CD14-positive monocyte (primary cell): ENCODE measurements at regions of chr17 and their contacts with region 1.

Region 1: DNA sequence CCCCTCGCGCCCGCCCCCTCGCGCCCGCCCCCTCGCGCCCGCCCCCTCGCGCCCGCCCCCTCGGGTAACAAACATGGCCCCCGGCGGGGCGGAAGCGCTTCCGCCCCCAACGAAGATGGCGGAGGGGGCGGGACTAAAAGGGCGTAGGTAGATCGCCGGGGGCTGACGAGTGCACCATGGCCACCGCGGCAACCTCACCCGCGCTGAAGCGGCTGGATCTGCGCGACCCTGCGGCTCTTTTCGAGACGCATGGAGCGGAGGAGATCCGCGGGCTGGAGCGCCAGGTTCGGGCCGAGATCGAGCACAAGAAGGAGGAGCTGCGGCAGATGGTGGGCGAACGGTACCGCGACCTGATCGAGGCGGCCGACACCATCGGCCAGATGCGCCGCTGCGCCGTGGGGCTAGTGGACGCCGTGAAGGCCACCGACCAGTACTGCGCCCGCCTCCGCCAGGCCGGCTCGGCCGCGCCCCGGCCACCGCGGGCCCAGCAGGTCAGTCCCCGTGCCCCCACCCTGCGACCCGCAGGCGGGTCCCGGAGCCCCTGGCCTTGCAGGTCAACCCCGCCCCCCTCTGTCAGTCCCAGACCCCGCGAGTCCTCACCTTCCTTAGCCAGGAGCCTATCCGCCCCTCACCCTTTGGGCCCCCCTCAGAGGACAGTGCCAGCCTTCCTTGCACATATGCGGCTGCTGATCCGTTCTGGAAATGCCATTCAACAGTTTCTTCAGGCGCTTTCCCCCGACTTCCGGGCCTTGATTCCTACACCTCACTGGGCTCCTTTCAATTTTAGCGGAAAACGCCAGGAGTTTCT is at the start of gene COG1:
- DNase-seq: peak; percentile 85 to 92 (median 85)
- H3K4me3 ChIP-seq: peak within 1 kb of the TSS; percentile 88 to 93 (median 92)
- H3K4me3 Mint-ChIP-seq: peak within 1 kb of the TSS; percentile 96
- H3K27ac ChIP-seq: peak within 1 kb of the TSS; percentile 47 to 82
- H3K27ac Mint-ChIP-seq: peak within 1 kb of the TSS; percentile 86 to 96 (median 94)
- H3K4me1 ChIP-seq: peaks cover 21 to 22% of the 10 kb centered on the region in 2 donors
- H3K4me1 Mint-ChIP-seq: peaks cover 23% of the 10 kb centered on the region
- H3K27me3 ChIP-seq: no peaks in the 10 kb centered on the region
- H3K27me3 Mint-ChIP-seq: peaks cover 0 to 2% (median 0%) of the 10 kb centered on the region in 3 donors
- CTCF ChIP-seq: no peak
- polyA plus RNA-seq, gene COG1: 5.1 to 24.4 (median 8.0) TPM

Region 2: DNA sequence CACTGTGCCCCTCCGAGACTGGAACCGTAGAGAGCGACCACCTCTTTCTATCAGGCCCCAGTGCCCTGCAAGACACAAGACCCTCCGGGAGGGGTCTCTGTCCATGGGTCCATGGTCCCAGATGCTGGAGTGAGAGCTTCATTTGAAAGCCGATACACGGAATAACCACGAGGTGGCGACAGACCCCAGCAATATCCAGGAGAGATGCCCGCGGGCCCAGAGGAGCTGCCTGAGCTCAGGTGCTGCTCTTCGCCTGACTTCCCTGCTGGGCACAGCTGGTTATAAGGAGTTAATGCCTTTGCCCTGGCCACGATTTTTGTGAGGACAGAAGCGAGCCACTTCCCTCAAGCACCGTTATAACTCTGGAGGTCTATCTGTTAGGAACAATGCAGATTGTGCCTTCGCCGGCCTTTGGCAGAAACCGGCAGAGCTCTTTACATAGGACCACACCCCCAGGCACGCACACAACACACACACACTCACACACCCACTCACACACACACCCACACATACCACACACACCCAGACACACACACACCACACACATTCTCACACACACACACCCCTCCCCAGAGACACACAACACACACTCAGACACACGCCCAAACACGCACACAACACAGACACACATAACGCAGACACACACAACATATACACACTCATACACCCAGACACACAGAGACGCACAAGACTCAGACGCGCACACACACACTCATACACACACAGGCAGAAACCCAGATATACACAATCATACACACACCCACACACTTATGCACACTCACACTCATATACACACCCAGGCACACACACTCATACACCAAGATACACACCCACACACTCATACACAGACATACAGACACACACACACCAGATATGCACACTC is 635.9 kb before region 1 on chr17:
- intact Hi-C with region 1: loop called in 1 of 2 experiments (anchors 10 kb)
- DNase-seq: peak; percentile 6 to 37 (median 23)
- H3K4me3 ChIP-seq: no peak overlapping the region
- H3K4me3 Mint-ChIP-seq: no peak overlapping the region
- H3K27ac ChIP-seq: no peak overlapping the region
- H3K27ac Mint-ChIP-seq: no peak overlapping the region
- H3K4me1 ChIP-seq: no peaks in the 10 kb centered on the region
- H3K4me1 Mint-ChIP-seq: no peaks in the 10 kb centered on the region
- H3K27me3 ChIP-seq: no peaks in the 10 kb centered on the region
- H3K27me3 Mint-ChIP-seq: peaks cover 1 to 3% (median 3%) of the 10 kb centered on the region in 3 donors
- CTCF ChIP-seq: peak; percentile 85

Region 3: DNA sequence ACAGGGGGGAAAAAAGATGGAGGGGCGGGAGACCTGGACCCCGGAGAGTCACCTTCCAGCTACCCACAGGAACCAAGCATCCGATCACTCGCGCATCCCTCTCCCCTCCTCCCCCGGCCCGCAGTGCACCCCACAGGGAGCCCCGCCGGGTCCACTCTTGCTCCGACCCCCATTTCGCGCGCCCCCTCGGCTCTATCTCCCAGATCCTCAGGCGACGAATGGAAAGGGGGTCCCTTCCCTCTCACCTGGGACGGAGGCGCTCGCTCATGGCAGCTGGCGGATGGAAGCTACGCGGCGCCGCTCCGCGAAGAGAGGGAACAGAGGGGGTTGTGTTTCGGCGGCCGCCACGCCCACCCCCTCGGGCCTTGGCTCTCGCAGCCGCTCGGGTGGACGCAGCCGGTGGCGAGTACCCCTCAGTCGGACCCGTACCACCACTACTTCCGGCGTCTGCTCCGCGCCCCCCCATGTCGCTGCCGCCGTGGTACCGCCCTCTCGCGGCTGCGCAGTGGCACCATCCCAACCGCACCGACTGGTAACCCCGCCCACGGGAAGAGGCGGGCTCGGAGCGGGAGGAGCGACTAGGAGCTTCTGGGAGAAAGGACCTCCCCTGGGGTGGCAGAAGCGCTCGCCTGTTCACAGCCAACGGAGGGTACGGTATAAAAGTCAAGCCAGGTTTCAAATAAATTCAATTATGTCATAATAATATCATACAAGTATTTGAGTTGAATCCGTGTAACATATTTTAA is 38.9 kb after region 1 on chr17:
- intact Hi-C with region 1: loop called (anchors 2 to 5 kb)
- DNase-seq: peak; percentile 84 to 92 (median 89)
- H3K4me3 ChIP-seq: peak overlapping the region; percentile 86 to 98 (median 97)
- H3K4me3 Mint-ChIP-seq: peak overlapping the region; percentile 94
- H3K27ac ChIP-seq: peak overlapping the region; percentile 22 to 79
- H3K27ac Mint-ChIP-seq: peak overlapping the region; percentile 90 to 99 (median 97)
- H3K4me1 ChIP-seq: peaks cover 38 to 56% of the 10 kb centered on the region in 2 donors
- H3K4me1 Mint-ChIP-seq: peaks cover 53% of the 10 kb centered on the region
- H3K27me3 ChIP-seq: no peaks in the 10 kb centered on the region
- H3K27me3 Mint-ChIP-seq: no peaks in the 10 kb centered on the region
- CTCF ChIP-seq: peak; percentile 18